A673 (cell line): ENCODE measurements at regions of chr20 and their contacts with region 1.

Region 1: DNA sequence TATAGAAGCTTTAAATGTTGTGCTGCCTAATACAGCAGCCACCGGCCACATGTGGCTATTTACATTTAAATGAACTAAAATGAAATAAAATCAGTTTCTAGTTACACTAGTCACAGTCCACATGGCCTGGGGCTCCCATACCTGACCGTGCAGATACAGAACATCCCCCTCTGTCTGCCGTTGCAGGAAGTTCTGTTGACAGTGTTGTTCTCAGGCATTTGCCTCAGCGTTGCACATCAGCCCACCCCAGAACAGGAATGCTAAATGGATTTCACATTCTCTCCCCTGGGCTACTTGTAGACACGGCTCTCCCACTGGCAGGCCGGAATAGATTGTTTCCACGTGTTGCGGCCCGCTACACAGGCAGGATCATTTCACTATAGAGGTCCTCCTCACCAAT is 26.3 kb downstream of the JAG1 start:
- DNase-seq: peak; percentile 48
- H3K4me3 ChIP-seq: no peak overlapping the region
- H3K27ac ChIP-seq: no peak overlapping the region
- H3K4me1 ChIP-seq: peaks cover 37% of the 10 kb centered on the region
- H3K27me3 ChIP-seq: no peaks in the 10 kb centered on the region
- CTCF ChIP-seq: peak; percentile 55

Region 2: DNA sequence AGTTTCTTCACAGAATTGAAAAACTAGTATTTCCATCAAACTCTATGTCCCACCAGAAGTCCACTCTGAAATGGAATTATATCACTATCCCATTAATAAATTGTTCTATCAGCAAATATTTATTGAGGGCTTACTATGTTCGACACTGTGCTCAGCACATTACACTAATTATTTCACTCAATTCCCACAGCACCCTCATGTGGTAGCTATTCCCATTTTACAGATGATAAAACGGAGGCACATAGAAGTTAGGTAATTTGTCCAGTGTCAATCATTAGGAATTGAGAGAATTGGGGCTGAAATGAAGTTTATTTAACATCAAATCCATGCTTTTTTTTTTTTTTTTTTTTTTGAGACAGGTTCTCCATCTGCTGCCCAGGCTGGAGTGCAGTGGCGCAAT is 266.0 kb before region 1 on chr20:
- CTCF ChIA-PET with region 1: no interaction called
- POLR2A ChIA-PET with region 1: no interaction called
- intact Hi-C with region 1: no loop called
- DNase-seq: peak; percentile 36
- H3K4me3 ChIP-seq: no peak overlapping the region
- H3K27ac ChIP-seq: no peak overlapping the region
- H3K4me1 ChIP-seq: no peaks in the 10 kb centered on the region
- H3K27me3 ChIP-seq: no peaks in the 10 kb centered on the region
- CTCF ChIP-seq: 0 out of 2 replicates have a peak, but pooled peaks have one; percentile 24

Region 3: DNA sequence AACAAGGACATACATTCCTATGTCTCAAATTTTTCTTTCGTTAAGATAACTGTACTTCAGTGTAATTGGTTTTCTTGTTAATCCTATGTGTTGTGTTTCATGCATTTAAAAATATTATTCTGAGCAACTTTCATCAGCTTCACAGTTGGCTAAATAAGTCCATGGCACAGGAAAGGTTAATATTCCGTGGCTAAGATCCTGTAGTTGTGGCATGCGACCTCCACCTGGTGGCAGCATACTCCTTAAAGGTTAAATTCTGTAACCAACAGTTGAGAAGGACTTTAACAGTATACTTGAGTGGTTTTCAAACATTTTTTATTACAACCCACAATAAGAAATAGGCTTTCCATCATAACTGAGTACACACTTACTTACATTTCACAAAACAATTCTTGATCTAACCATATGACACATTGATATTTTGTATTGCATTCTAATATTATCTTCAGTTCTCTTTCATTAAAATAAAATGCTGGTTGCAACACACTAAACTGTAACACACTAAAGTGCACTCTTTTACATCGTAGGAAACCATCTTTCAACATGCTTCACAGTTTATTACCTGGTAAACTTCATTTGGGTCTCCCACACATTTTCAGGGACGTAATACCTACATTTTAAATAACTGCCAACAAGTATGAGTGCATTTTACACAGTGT is 94.0 kb before region 1 on chr20:
- CTCF ChIA-PET with region 1: no interaction called
- POLR2A ChIA-PET with region 1: no interaction called
- intact Hi-C with region 1: loop called (anchors 5 kb)
- DNase-seq: peak; percentile 86
- H3K4me3 ChIP-seq: no peak overlapping the region
- H3K27ac ChIP-seq: no peak overlapping the region
- H3K4me1 ChIP-seq: peaks cover 28% of the 10 kb centered on the region
- H3K27me3 ChIP-seq: no peaks in the 10 kb centered on the region
- CTCF ChIP-seq: peak; percentile 89